GM10248 (cell line): ENCODE measurements at regions of chr3 and their contacts with region 1.

Region 1: DNA sequence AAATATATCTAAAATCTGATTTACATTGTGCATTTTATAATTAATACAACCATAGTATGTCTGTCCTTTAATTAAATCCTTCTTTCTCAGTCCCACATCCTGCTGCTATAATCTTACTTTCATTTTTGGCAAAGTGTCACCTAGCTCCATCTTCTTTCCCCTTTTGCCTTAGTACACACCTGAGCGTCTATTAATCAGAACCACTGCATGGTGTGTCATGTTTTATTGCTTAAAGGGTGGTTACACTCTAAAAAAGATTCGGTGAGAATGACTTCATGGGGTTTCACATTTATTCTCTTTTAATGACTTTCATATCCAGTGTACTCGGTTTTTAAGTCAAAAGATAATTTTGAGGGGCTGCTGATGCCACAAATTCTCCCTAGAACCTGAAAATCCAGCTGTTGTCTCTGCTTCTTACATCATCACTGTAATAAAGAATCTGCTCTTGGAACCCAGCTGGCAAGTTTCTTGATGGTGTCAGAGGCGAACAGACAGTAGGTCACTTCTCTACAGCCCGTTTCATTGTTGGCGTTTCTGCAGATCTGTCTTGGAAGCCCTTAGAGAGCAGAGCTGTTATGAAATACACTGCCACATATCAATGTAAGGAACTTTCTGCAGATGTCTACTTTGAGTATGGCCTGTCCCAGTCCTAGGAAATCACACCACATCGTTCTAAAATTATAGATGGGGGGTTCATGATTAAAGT is 99.7 kb downstream of the TIGIT start:
- DNase-seq: no peak
- CTCF ChIP-seq: no peak

Region 2: DNA sequence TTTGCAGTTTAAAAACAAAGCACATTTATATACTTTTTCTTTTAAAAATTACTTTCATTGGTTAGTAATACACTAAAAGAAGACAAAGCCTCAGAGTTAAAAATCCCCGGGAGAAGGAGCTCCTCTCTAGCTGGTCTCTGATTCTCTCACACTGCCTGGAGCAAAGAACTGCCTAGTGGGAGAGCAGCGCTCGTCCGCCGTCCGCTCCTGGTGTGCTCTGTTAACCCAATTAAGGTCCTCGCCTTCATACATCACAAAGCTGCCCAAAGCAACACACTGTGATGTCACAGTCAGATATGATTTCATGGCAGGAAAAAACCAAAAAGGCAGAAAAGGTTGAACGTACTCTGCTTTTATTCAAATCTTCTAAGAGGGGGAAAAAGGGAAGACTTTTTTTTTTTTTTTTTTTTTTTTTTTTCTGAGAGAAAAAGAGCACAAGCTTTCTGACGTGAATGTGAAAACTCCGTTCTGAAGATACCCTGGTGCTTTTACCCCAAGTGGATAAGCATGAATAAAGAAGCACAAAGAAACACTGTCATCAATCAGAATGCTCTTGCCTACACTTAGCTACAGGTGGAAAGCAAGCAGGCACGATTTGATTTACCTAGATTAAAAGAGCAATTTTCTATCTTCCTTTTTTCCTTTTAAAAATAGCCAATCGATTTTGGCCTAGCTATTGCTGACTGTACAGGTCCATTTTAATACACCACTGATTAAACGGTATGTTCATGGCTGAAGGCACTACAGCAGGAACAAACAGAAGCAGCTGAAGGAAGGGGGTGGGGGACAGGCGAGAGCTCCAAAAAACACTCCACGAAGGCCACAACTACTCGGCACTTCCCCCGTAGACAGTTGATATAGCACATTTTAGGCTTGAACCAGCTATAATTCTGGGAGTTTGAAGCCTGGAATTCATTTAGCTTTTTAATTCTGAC is 15.5 kb after region 1 on chr3:
- CTCF ChIA-PET with region 1: interaction called, 29 read pairs
- POLR2A ChIA-PET with region 1: no interaction called
- DNase-seq: no peak
- CTCF ChIP-seq: no peak